CD8-positive, alpha-beta T cell (primary cell): ENCODE measurements at regions of chr14 and their contacts with region 1.

Region 1: DNA sequence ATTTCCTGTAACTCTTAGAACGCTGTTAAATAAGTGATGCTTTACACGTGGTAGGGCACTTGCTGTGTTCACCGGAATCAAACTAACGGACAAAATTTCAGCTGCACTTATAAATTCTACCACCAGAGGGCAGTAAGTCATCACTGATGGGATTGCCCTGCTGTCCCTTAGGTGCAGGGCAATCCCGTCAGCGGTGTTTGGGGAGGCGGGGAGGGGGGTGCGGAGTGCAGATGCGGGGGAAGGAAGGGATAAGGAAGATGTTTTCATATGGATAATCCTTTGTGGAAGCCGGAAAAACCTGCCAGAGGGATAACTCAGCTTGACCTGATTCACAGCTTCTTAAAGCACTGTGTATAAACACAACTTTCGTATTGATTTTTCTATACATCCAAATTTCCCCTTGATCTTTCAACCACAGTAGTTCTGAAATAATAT is 21.7 kb upstream of the SLC10A1 start:
- DNase-seq: peak; percentile 6 to 74 (median 25)
- ATAC-seq: peak; percentile 73
- H3K4me3 ChIP-seq: no peak overlapping the region
- H3K4me3 Mint-ChIP-seq: no peak overlapping the region
- H3K27ac ChIP-seq: no peak overlapping the region
- H3K27ac Mint-ChIP-seq: no peak overlapping the region
- H3K4me1 ChIP-seq: no peaks in the 10 kb centered on the region
- H3K4me1 Mint-ChIP-seq: peaks cover 4% of the 10 kb centered on the region
- H3K27me3 ChIP-seq: no peaks in the 10 kb centered on the region
- H3K27me3 Mint-ChIP-seq: peaks cover 3% of the 10 kb centered on the region
- CTCF ChIP-seq: peak; percentile 89

Region 2: GRCh38 chr14:70027785-70028428 is 209.1 kb after region 1 on chr14:
- CTCF ChIA-PET with region 1: interaction called, 25 read pairs
- POLR2A ChIA-PET with region 1: no interaction called
- intact Hi-C with region 1: loop called in 1 of 2 experiments (anchors 1 kb)
- DNase-seq: peak; percentile 14 to 67 (median 55)
- ATAC-seq: peak; percentile 42
- H3K4me3 ChIP-seq: no peak overlapping the region
- H3K4me3 Mint-ChIP-seq: no peak overlapping the region
- H3K27ac ChIP-seq: no peak overlapping the region
- H3K27ac Mint-ChIP-seq: no peak overlapping the region
- H3K4me1 ChIP-seq: no peaks in the 10 kb centered on the region
- H3K4me1 Mint-ChIP-seq: peaks cover 2% of the 10 kb centered on the region
- H3K27me3 ChIP-seq: no peaks in the 10 kb centered on the region
- H3K27me3 Mint-ChIP-seq: peaks cover 6% of the 10 kb centered on the region
- CTCF ChIP-seq: peak; percentile 49

Region 3: GRCh38 chr14:70317969-70318634 is 499.3 kb after region 1 on chr14:
- CTCF ChIA-PET with region 1: no interaction called
- POLR2A ChIA-PET with region 1: no interaction called
- intact Hi-C with region 1: loop called in 1 of 2 experiments (anchors 10 kb)
- DNase-seq: no peak
- ATAC-seq: no peak
- H3K4me3 ChIP-seq: no peak overlapping the region
- H3K4me3 Mint-ChIP-seq: no peak overlapping the region
- H3K27ac ChIP-seq: no peak overlapping the region
- H3K27ac Mint-ChIP-seq: no peak overlapping the region
- H3K4me1 ChIP-seq: no peaks in the 10 kb centered on the region
- H3K4me1 Mint-ChIP-seq: no peaks in the 10 kb centered on the region
- H3K27me3 ChIP-seq: no peaks in the 10 kb centered on the region
- H3K27me3 Mint-ChIP-seq: peaks cover 7% of the 10 kb centered on the region
- CTCF ChIP-seq: no peak

Region 4: GRCh38 chr14:70809543-70810244 is 990.9 kb after region 1 on chr14:
- CTCF ChIA-PET with region 1: no interaction called
- POLR2A ChIA-PET with region 1: no interaction called
- intact Hi-C with region 1: loop called (anchors 5 to 10 kb)
- DNase-seq: peak; percentile 70 to 95 (median 87)
- ATAC-seq: peak; percentile 79
- H3K4me3 ChIP-seq: peak overlapping the region; percentile 58 to 65
- H3K4me3 Mint-ChIP-seq: no peak overlapping the region
- H3K27ac ChIP-seq: peak overlapping the region; percentile 30 to 56
- H3K27ac Mint-ChIP-seq: peak overlapping the region; percentile 80
- H3K4me1 ChIP-seq: peaks cover 12% of the 10 kb centered on the region
- H3K4me1 Mint-ChIP-seq: peaks cover 10% of the 10 kb centered on the region
- H3K27me3 ChIP-seq: no peaks in the 10 kb centered on the region
- H3K27me3 Mint-ChIP-seq: no peaks in the 10 kb centered on the region
- CTCF ChIP-seq: no peak

Region 5: GRCh38 chr14:70972107-70972976 is 1153.6 kb after region 1 on chr14:
- CTCF ChIA-PET with region 1: no interaction called
- POLR2A ChIA-PET with region 1: no interaction called
- intact Hi-C with region 1: loop called in 1 of 2 experiments (anchors 1 kb)
- DNase-seq: peak; percentile 65 to 90 (median 85)
- ATAC-seq: peak; percentile 81
- H3K4me3 ChIP-seq: no peak overlapping the region
- H3K4me3 Mint-ChIP-seq: no peak overlapping the region
- H3K27ac ChIP-seq: peak overlapping the region in 1 of 2 experiments; percentile 0
- H3K27ac Mint-ChIP-seq: peak overlapping the region; percentile 53
- H3K4me1 ChIP-seq: peaks cover 25% of the 10 kb centered on the region
- H3K4me1 Mint-ChIP-seq: peaks cover 48% of the 10 kb centered on the region
- H3K27me3 ChIP-seq: no peaks in the 10 kb centered on the region
- H3K27me3 Mint-ChIP-seq: no peaks in the 10 kb centered on the region
- CTCF ChIP-seq: peak; percentile 81